ENCODE measurements at regions of chr7 and their contacts with region 1.

Region 1: GRCh38 chr7:77798394-77799077 is at the starts of genes PHTF2 and TMEM60:
- DNase-seq: peak; percentile 98
- H3K4me3 Mint-ChIP-seq: peak within 1 kb of the TSS; percentile 97
- H3K27ac Mint-ChIP-seq: peak within 1 kb of the TSS; percentile 98
- H3K4me1 Mint-ChIP-seq: peaks cover 54% of the 10 kb centered on the region
- H3K27me3 Mint-ChIP-seq: no peaks in the 10 kb centered on the region
- total RNA-seq, gene PHTF2: 31.5 and 32.1 TPM in 2 replicates
- total RNA-seq, gene TMEM60: 9.7 and 10.3 TPM in 2 replicates

Region 2: GRCh38 chr7:77696198-77697028 is 102.1 kb before region 1 on chr7 and contains the start of gene RSBN1L:
- intact Hi-C with region 1: loop called (anchors 1 kb)
- DNase-seq: peak; percentile 100
- H3K4me3 Mint-ChIP-seq: peak within 1 kb of the TSS; percentile 93
- H3K27ac Mint-ChIP-seq: peak within 1 kb of the TSS; percentile 98
- H3K4me1 Mint-ChIP-seq: peaks cover 36% of the 10 kb centered on the region
- H3K27me3 Mint-ChIP-seq: no peaks in the 10 kb centered on the region
- total RNA-seq, gene RSBN1L: 26.3 and 31.3 TPM in 2 replicates

Region 3: GRCh38 chr7:77830649-77831355 is 32.3 kb after region 1 on chr7:
- intact Hi-C with region 1: loop called (anchors 1 kb)
- DNase-seq: no peak
- H3K4me3 Mint-ChIP-seq: no peak overlapping the region
- H3K27ac Mint-ChIP-seq: peak overlapping the region; percentile 27
- H3K4me1 Mint-ChIP-seq: peaks cover 39% of the 10 kb centered on the region
- H3K27me3 Mint-ChIP-seq: no peaks in the 10 kb centered on the region

Region 4: DNA sequence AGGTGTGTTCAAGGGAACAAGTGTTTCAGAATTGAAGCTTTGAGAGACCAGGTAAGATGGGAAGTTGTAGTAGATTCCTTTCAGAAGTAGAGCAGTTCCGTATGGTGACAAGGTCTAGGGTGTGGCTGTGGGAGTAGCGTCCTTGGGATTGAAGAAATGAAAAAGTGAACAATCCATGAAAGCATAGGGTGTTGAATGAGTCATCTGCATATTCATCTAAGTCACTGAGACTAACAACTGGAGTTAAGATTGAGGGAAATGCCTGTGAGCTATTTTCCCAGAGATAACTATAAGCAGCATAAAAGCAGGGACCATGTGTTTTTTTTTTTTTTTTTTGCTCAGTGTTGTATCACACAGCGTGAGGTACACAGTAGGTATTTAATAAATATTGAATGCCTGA is 134.9 kb after region 1 on chr7:
- intact Hi-C with region 1: loop called (anchors 5 kb)
- DNase-seq: no peak
- H3K4me3 Mint-ChIP-seq: no peak overlapping the region
- H3K27ac Mint-ChIP-seq: no peak overlapping the region
- H3K4me1 Mint-ChIP-seq: peaks cover 12% of the 10 kb centered on the region
- H3K27me3 Mint-ChIP-seq: no peaks in the 10 kb centered on the region